Natural killer cell (primary cell): ENCODE measurements at regions of chr10 and their contacts with region 1.

Region 1: DNA sequence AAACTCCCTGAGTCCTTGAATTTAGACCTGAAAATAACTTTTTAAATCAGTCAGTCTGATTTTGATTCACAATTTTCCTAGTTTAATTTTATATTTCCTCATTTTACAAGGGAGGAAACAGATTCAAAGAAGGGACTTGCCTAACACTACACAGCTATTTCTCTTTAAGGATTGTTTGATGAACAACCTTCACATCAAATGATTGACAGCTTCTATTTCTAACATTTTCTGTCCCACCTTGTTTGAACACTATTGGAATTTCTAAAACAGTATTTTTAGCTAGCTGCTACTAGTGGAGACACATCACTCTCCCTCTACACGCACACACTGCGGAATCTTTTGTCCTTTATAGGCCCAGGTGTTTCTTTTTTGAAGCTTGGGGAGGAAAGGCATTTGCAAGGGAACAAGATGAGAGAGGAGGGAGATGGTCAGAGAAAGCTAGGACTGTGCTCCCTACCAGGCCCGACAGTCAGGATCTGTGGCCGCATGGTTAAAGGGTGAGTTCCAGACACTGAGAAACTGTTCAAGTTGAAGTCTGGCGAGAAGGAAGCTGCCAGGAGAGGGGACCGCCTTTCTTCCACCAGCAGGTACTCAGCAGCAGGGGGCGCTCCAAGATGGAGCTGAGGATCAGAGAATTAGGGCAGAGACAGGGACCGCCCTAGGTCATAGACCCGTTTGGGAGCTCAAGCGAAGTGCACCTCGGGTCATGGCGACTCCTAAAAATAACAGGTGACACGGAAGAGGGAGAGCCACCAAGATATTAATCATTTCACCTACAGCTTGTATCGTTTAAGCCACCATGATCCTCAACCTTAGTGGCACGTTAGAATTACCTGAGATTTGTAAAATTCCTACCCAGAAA is 49.7 kb downstream of the DNAJC12 start:
- DNase-seq: peak; percentile 37 to 77
- ATAC-seq: peak in 2 of 3 donors; percentile 44 to 61
- H3K4me3 ChIP-seq: no peak overlapping the region
- H3K4me3 Mint-ChIP-seq: no peak overlapping the region
- H3K27ac ChIP-seq: no peak overlapping the region
- H3K27ac Mint-ChIP-seq: no peak overlapping the region
- H3K4me1 ChIP-seq: peaks cover 15% of the 10 kb centered on the region
- H3K4me1 Mint-ChIP-seq: peaks cover 13 to 18% of the 10 kb centered on the region in 2 donors
- H3K27me3 ChIP-seq: no peaks in the 10 kb centered on the region
- H3K27me3 Mint-ChIP-seq: peaks cover 0 to 2% of the 10 kb centered on the region in 2 donors
- CTCF ChIP-seq: peak; percentile 58

Region 2: DNA sequence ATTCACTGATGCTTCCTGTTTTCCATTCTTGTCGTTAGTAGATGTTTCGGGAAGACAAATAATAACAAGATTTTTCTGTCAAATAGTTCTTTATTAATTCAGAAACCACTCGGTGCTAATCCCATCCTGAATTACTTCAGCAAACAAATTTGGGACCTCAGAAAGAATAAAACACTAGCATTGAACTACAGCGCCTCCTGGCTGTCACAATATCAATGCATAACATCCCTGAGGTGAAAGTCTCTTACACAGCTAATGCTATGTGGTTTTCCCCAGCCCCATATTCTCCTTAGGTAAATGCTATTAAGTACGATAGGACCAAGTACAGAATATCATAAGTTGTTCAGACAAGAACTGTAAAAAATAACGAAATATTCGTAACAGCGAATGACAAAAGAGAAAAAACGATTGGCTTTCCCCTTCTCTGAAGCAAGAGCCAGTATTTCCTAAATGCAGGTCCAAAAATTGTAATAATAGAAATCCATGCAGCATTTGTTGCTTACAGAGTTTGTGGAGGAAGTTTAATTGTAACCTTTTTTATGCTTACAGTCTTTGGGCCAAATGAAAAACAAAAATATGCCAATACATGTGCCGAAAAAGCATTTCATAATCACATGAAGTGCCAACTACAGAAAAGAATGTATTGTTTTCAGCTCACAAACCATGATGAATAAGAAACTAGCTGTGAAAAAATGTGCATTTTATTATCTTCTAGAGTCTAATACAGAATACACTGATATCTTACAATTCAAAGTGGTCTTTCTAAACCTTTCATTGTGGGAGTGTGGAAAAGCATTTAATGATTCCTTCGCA is 368.3 kb after region 1 on chr10:
- intact Hi-C with region 1: loop called (anchors 1 kb)
- DNase-seq: peak; percentile 38 to 82
- ATAC-seq: peak in 2 of 3 donors; percentile 68
- H3K4me3 ChIP-seq: no peak overlapping the region
- H3K4me3 Mint-ChIP-seq: no peak overlapping the region
- H3K27ac ChIP-seq: no peak overlapping the region
- H3K27ac Mint-ChIP-seq: no peak overlapping the region
- H3K4me1 ChIP-seq: no peaks in the 10 kb centered on the region
- H3K4me1 Mint-ChIP-seq: no peaks in the 10 kb centered on the region
- H3K27me3 ChIP-seq: no peaks in the 10 kb centered on the region
- H3K27me3 Mint-ChIP-seq: peaks cover 2 to 25% of the 10 kb centered on the region in 2 donors
- CTCF ChIP-seq: peak; percentile 86